ENCODE measurements at regions of chr2 and their contacts with region 1.

Region 1: GRCh38 chr2:121649596-121650314 is 493 bp upstream of the CLASP1 start:
- DNase-seq: peak; percentile 91 to 97 (median 96)
- H3K4me3 ChIP-seq: peak overlapping the region; percentile 56 to 98 (median 92)
- H3K27ac ChIP-seq: peak overlapping the region; percentile 87 to 100 (median 98)
- H3K27me3 ChIP-seq: no peaks in the 10 kb centered on the region
- CTCF ChIP-seq: peak in 18 of 56 donors; percentile 2 to 40 (median 12)

Region 2: GRCh38 chr2:121400201-121400600 is 249.6 kb before region 1 on chr2:
- intact Hi-C with region 1: loop called (anchors 5 to 10 kb)
- DNase-seq: no peak
- H3K4me3 ChIP-seq: no peak overlapping the region
- H3K27ac ChIP-seq: no peak overlapping the region
- H3K27me3 ChIP-seq: no peaks in the 10 kb centered on the region
- CTCF ChIP-seq: no peak

Region 3: DNA sequence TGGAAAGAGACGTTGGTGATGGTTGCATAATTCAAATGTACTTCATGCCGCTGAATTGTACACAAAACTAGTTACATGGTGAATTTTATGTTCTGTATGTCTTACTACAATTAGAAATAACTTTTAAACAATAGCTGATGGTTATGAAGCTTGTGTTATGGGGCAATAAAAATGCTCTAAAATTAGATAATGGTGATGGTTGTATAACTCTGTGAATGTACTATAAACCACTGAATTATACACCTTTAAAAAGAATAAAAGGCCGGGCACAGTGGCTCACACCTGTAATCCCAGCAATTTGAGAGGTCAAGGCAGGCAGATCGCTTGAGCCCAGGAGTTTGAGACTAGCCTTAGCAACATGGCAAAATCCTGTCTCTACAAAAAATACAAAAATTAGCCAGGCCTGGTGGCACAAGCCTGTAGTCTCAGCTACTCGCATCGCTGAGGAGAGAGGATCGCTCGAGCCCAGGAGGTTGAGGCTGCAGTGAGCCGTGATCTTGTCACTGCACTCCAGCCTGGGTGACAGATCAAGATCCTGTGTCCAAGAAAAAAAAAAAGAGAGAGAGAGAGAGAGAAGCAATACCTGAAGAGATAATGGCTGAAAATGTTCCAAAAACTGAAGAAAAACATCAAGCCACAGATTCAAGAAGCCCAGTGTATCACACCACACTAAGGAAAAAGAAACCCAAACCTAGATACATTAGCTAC is 112.8 kb before region 1 on chr2:
- intact Hi-C with region 1: no loop called
- DNase-seq: no peak
- H3K4me3 ChIP-seq: no peak overlapping the region
- H3K27ac ChIP-seq: no peak overlapping the region
- H3K27me3 ChIP-seq: no peaks in the 10 kb centered on the region
- CTCF ChIP-seq: no peak

Region 4: GRCh38 chr2:121596221-121597080 is 53.3 kb before region 1 on chr2:
- intact Hi-C with region 1: loop called in 1 of 2 experiments (anchors 2 kb)
- DNase-seq: peak in 1 of 10 donors; percentile 14
- H3K4me3 ChIP-seq: peak overlapping the region in 25 of 59 donors; percentile 4 to 45 (median 25)
- H3K27ac ChIP-seq: peak overlapping the region in 32 of 59 donors; percentile 1 to 75 (median 34)
- H3K27me3 ChIP-seq: no peaks in the 10 kb centered on the region
- CTCF ChIP-seq: peak; percentile 27 to 71 (median 54)

Region 5: DNA sequence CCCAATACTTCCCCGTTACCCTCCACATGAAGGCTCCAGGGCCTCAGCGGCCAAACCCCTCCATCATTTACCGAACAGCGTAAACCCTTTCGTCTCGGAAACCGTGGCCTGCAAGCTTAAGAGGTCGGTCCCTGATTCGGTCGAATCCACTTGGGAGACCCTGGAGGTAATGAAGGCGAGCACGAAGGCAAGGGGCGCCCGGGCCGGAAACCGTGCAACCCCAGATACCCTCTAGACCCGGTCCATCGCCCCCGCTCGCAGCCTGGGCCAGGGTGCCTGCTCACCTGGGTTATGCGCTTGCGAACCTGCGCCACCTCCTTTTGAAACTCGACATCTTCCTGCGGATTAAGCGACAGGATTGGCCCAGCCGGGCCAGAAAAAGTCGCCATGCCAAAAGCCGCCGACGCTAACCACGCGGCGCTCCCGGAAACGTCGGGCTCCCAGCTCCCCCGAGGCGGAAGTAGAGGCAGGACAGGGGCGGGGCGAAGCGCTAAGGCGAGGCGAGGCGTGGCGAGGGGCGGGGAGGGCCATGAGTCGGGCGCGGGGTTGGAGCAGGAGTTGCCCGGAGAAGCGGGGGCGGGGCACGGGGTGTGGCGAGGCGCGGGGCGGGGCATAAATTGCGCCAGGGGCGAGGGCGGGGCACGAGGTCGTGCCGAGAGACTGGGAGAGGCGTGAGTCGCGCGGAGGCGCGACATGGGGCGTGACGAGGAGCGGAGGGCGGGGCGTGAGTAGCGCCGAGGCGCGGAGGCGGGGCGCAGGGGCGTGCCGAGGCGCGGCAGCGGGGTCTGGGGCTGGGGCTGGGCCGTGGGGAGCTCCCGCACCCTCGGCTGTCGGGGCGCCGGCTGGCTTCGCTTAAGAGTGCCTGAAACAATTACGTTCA is 86.9 kb after region 1 on chr2 and contains the start of gene NIFK:
- intact Hi-C with region 1: loop called (anchors 2 to 5 kb)
- DNase-seq: peak; percentile 96 to 99 (median 98)
- H3K4me3 ChIP-seq: peak within 1 kb of the TSS; percentile 51 to 97 (median 90)
- H3K27ac ChIP-seq: peak within 1 kb of the TSS in 56 of 59 donors; percentile 7 to 89 (median 76)
- H3K27me3 ChIP-seq: no peaks in the 10 kb centered on the region
- CTCF ChIP-seq: peak in 19 of 56 donors; percentile 0 to 42 (median 17)
- total RNA-seq, gene NIFK: 16.8 to 47.3 (median 29.2) TPM

Region 6: GRCh38 chr2:121755236-121756111 is 105.7 kb after region 1 on chr2 and contains the start of gene TSN:
- intact Hi-C with region 1: loop called in 1 of 2 experiments (anchors 5 kb)
- DNase-seq: peak; percentile 94 to 97 (median 97)
- H3K4me3 ChIP-seq: peak within 1 kb of the TSS; percentile 70 to 100 (median 94)
- H3K27ac ChIP-seq: peak within 1 kb of the TSS in 53 of 59 donors; percentile 12 to 90 (median 73)
- H3K27me3 ChIP-seq: no peaks in the 10 kb centered on the region
- CTCF ChIP-seq: peak in 30 of 56 donors; percentile 5 to 62 (median 30)
- total RNA-seq, gene TSN: 42.4 to 82.9 (median 58.1) TPM